ENCODE measurements at regions of chrX and their contacts with region 1.

Region 1: DNA sequence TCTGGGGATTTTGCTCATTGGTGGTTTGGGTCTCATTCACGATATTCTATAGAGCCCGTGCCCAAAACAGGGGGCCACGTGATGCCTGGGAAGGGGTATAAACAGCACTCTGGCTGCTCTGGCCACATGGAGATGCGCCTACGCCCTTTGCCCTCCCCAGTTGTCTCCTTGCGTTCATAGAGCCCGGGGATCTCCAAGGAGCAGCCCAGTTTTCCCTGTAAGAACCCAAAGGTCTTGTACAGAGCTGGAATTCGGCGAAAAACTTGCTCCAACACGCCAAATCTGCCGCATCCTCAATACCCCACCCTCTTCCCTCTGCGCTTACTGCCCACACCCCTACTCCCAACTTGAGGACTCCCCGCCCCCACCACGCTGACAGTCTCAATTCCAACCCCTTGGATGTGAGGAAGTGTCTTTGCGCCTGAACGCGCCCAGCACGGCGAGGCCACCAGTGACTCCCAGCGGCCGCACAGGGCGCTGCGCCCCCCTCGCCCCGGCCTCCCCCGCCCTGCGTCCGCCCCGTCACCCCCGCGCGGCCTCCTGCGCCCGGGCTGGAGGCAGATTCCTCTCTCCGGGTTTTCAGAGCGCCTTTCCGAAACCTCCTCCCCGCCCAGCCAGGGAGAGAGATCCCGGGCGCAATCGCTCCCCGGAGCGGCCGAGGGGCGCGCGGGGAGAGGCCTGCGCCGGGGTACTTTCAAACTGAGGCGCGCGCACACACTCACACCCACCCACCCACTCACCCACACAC is at the start of gene NHS:
- DNase-seq: peak; percentile 63 to 87
- H3K4me3 ChIP-seq: peak within 1 kb of the TSS; percentile 71 to 74
- H3K27ac ChIP-seq: peak within 1 kb of the TSS; percentile 65 to 84
- H3K4me1 ChIP-seq: no peaks in the 10 kb centered on the region
- H3K27me3 ChIP-seq: no peaks in the 10 kb centered on the region
- CTCF ChIP-seq: peak; percentile 41 to 61

Region 2: GRCh38 chrX:15633276-15633868 is 1741.4 kb before region 1 on chrX:
- intact Hi-C with region 1: no loop called
- DNase-seq: no peak
- H3K4me3 ChIP-seq: no peak overlapping the region
- H3K27ac ChIP-seq: no peak overlapping the region
- H3K4me1 ChIP-seq: no peaks in the 10 kb centered on the region
- H3K27me3 ChIP-seq: no peaks in the 10 kb centered on the region
- CTCF ChIP-seq: no peak

Region 3: GRCh38 chrX:17242470-17242869 is 132.3 kb before region 1 on chrX:
- intact Hi-C with region 1: loop called (anchors 5 kb)
- DNase-seq: peak; percentile 32 to 59
- H3K4me3 ChIP-seq: no peak overlapping the region
- H3K27ac ChIP-seq: no peak overlapping the region
- H3K4me1 ChIP-seq: peaks cover 0 to 5% (median 0%) of the 10 kb centered on the region in 4 donors
- H3K27me3 ChIP-seq: no peaks in the 10 kb centered on the region
- CTCF ChIP-seq: peak; percentile 67 to 73

Region 4: GRCh38 chrX:17521871-17522693 is 147.3 kb after region 1 on chrX:
- intact Hi-C with region 1: loop called (anchors 10 kb)
- DNase-seq: no peak
- H3K4me3 ChIP-seq: no peak overlapping the region
- H3K27ac ChIP-seq: no peak overlapping the region
- H3K4me1 ChIP-seq: peaks cover 0 to 54% (median 8%) of the 10 kb centered on the region in 4 donors
- H3K27me3 ChIP-seq: no peaks in the 10 kb centered on the region
- CTCF ChIP-seq: no peak

Region 5: DNA sequence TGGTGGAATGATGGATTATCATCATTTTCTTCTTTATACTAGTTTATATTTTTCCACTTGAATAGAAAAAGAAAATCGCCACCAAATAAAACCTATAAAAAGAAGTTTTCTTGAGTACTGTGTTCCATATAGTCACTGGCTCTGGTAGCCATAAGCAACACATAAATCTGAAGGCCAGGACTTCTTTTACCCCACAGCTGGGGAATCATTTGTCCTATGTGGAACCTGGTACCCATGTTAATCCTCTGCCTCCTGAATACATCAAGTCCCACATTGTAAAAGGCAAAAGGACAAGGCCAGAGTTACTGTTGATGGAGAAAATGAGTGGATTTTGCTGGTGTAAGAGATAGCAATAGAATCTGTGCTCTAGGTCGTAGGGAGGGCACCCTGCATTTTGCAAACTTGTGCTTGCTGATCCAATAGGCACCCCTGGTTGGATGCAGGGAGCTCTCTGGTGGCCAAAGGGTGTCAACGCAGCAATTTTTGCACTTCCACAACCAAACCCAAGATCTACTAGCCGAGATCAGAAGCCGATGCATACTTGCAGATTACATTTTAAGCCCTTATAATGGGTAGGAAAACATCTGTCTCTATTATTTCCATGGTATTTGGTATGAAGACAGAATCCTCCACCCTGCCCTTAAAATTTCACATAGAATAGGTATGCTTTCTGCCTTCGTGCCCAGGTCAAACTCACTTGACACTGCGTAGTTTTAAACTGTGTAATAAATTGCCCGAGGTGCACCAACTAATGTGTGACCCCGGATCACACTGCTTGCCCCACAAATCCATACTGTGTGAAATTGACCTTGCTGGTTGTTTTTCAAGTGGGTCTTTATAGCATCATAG is 216.3 kb after region 1 on chrX:
- intact Hi-C with region 1: loop called (anchors 2 kb)
- DNase-seq: peak; percentile 69 to 77
- H3K4me3 ChIP-seq: peak overlapping the region; percentile 28 to 32
- H3K27ac ChIP-seq: peak overlapping the region; percentile 57 to 75
- H3K4me1 ChIP-seq: peaks cover 0 to 41% (median 9%) of the 10 kb centered on the region in 4 donors
- H3K27me3 ChIP-seq: no peaks in the 10 kb centered on the region
- CTCF ChIP-seq: peak; percentile 65